GM18951 (cell line): ENCODE measurements at regions of chr13 and their contacts with region 1.

Region 1: GRCh38 chr13:23915308-23915707 is 18.0 kb upstream of the C1QTNF9B start:
- POLR2A ChIP-seq: no peak

Region 2: GRCh38 chr13:23339225-23339624 is 576.1 kb before region 1 on chr13:
- in situ Hi-C with region 1: no loop called
- POLR2A ChIP-seq: no peak

Region 3: DNA sequence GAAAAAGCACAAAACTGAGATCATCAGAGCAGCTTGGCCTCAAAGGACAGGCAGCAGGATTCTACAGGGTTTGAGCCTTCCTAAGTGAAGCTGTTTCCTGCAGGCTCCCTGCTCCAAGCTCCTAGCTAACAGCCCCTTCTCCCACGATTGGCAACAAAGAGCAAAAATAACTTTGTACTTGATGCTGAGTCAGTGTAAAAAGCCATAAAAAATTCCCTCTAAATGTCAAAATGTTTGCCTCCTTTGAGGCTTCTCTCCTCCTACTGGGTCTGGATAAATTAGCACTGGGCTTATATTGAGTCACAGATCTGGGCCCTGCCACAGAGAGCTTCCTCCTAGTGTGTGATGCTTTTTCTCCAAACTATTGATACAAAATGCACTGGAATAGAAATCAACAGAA is 191.8 kb before region 1 on chr13:
- in situ Hi-C with region 1: no loop called
- POLR2A ChIP-seq: no peak

Region 4: DNA sequence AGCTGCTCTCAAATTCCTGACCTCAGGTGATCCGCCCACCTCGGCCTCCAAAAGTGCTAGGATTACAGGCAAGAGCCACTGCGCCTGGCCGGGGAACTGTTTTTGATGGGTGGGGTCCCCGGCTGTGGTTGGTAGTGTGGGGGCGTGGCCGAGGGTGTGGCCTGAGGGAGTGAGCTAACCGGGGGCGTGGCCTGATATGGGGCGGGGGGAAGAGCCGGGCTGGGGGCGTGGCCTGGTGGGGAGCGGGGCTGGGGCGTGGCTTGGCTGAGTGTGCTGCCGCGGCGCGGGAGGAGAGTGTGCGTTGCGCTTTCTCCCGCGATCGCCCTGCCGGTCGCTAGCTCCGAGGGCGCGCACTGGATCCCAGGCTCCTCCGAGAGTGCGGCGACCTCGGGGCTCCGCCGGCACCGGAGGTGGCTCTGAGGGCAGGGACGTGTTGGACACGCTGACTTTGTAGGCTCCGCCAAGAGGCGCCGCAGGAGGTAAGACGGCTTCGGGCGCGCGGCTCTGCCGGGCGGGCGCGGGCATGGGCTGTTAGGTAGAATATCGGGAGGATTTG is 245.2 kb after region 1 on chr13 and contains the start of gene SPATA13:
- in situ Hi-C with region 1: no loop called
- POLR2A ChIP-seq: peak; percentile 62

Region 5: GRCh38 chr13:24233351-24233901 is 318.1 kb after region 1 on chr13:
- in situ Hi-C with region 1: loop called (anchors 10 kb)
- POLR2A ChIP-seq: no peak